Naive thymus-derived CD4-positive, alpha-beta T cell (primary cell): ENCODE measurements at regions of chr2 and their contacts with region 1.

Region 1: GRCh38 chr2:219253753-219254590 is at the start of gene TUBA4A:
- DNase-seq: peak; percentile 84 to 94 (median 91)
- ATAC-seq: peak; percentile 92
- H3K4me3 ChIP-seq: peak within 1 kb of the TSS; percentile 79
- H3K4me3 Mint-ChIP-seq: peak within 1 kb of the TSS; percentile 82 to 100 (median 92)
- H3K27ac ChIP-seq: peak within 1 kb of the TSS; percentile 95
- H3K27ac Mint-ChIP-seq: peak within 1 kb of the TSS; percentile 88 to 99 (median 96)
- H3K4me1 ChIP-seq: peaks cover 31 to 38% of the 10 kb centered on the region in 2 donors
- H3K4me1 Mint-ChIP-seq: peaks cover 28 to 54% (median 47%) of the 10 kb centered on the region in 7 donors
- H3K27me3 ChIP-seq: no peaks in the 10 kb centered on the region
- H3K27me3 Mint-ChIP-seq: peaks cover 0 to 3% (median 0%) of the 10 kb centered on the region in 5 donors
- total RNA-seq, gene TUBA4A: 82.9 to 260 (median 183) TPM

Region 2: GRCh38 chr2:218286570-218287459 is 967.2 kb before region 1 on chr2:
- CTCF ChIA-PET with region 1: no interaction called
- POLR2A ChIA-PET with region 1: interaction called, 3 read pairs
- intact Hi-C with region 1: loop called in 1 of 2 experiments (anchors 10 kb)
- DNase-seq: peak; percentile 53 to 90 (median 78)
- ATAC-seq: peak; percentile 87
- H3K4me3 ChIP-seq: peak overlapping the region; percentile 66
- H3K4me3 Mint-ChIP-seq: peak overlapping the region; percentile 85 to 97 (median 94)
- H3K27ac ChIP-seq: peak overlapping the region; percentile 93
- H3K27ac Mint-ChIP-seq: peak overlapping the region; percentile 95 to 99 (median 99)
- H3K4me1 ChIP-seq: peaks cover 74 to 77% of the 10 kb centered on the region in 2 donors
- H3K4me1 Mint-ChIP-seq: peaks cover 53 to 87% (median 76%) of the 10 kb centered on the region in 7 donors
- H3K27me3 ChIP-seq: no peaks in the 10 kb centered on the region
- H3K27me3 Mint-ChIP-seq: no peaks in the 10 kb centered on the region

Region 3: GRCh38 chr2:218898109-218898878 is 355.7 kb before region 1 on chr2:
- CTCF ChIA-PET with region 1: no interaction called
- POLR2A ChIA-PET with region 1: no interaction called
- intact Hi-C with region 1: loop called in 1 of 2 experiments (anchors 5 kb)
- DNase-seq: peak; percentile 50 to 88 (median 72)
- ATAC-seq: peak; percentile 42
- H3K4me3 ChIP-seq: peak overlapping the region; percentile 65
- H3K4me3 Mint-ChIP-seq: peak overlapping the region; percentile 53 to 87 (median 82)
- H3K27ac ChIP-seq: no peak overlapping the region
- H3K27ac Mint-ChIP-seq: peak overlapping the region in 7 of 9 donors; percentile 33 to 92 (median 71)
- H3K4me1 ChIP-seq: peaks cover 40 to 49% of the 10 kb centered on the region in 2 donors
- H3K4me1 Mint-ChIP-seq: peaks cover 38 to 48% (median 42%) of the 10 kb centered on the region in 7 donors
- H3K27me3 ChIP-seq: peaks cover 0 to 3% of the 10 kb centered on the region in 2 donors
- H3K27me3 Mint-ChIP-seq: peaks cover 20 to 75% (median 40%) of the 10 kb centered on the region in 5 donors

Region 4: GRCh38 chr2:219218732-219219701 is 35.0 kb before region 1 on chr2 and contains the start of gene ABCB6:
- CTCF ChIA-PET with region 1: interaction called, 7 read pairs
- POLR2A ChIA-PET with region 1: interaction called, 49 read pairs
- intact Hi-C with region 1: loop called (anchors 1 kb)
- DNase-seq: peak; percentile 72 to 90 (median 85)
- ATAC-seq: peak; percentile 92
- H3K4me3 ChIP-seq: peak within 1 kb of the TSS; percentile 60
- H3K4me3 Mint-ChIP-seq: peak within 1 kb of the TSS; percentile 78 to 89 (median 82)
- H3K27ac ChIP-seq: peak within 1 kb of the TSS; percentile 65
- H3K27ac Mint-ChIP-seq: peak within 1 kb of the TSS; percentile 61 to 86 (median 79)
- H3K4me1 ChIP-seq: peaks cover 13 to 14% of the 10 kb centered on the region in 2 donors
- H3K4me1 Mint-ChIP-seq: peaks cover 0 to 29% (median 24%) of the 10 kb centered on the region in 7 donors
- H3K27me3 ChIP-seq: no peaks in the 10 kb centered on the region
- H3K27me3 Mint-ChIP-seq: no peaks in the 10 kb centered on the region
- total RNA-seq, gene ABCB6: 4.1 to 30.2 (median 8.3) TPM

Region 5: GRCh38 chr2:219229305-219230058 is 24.5 kb before region 1 on chr2 and contains the starts of genes ANKZF1 and ATG9A:
- CTCF ChIA-PET with region 1: interaction called, 14 read pairs
- POLR2A ChIA-PET with region 1: interaction called, 575 read pairs
- intact Hi-C with region 1: loop called (anchors 1 kb)
- DNase-seq: peak; percentile 92 to 99 (median 99)
- ATAC-seq: peak; percentile 98
- H3K4me3 ChIP-seq: peak within 1 kb of the TSS; percentile 80
- H3K4me3 Mint-ChIP-seq: peak within 1 kb of the TSS; percentile 94 to 100 (median 98)
- H3K27ac ChIP-seq: peak within 1 kb of the TSS; percentile 90
- H3K27ac Mint-ChIP-seq: peak within 1 kb of the TSS; percentile 96 to 100 (median 96)
- H3K4me1 ChIP-seq: peaks cover 17 to 22% of the 10 kb centered on the region in 2 donors
- H3K4me1 Mint-ChIP-seq: peaks cover 33 to 83% (median 69%) of the 10 kb centered on the region in 7 donors
- H3K27me3 ChIP-seq: no peaks in the 10 kb centered on the region
- H3K27me3 Mint-ChIP-seq: no peaks in the 10 kb centered on the region
- total RNA-seq, gene ANKZF1: 117 to 287 (median 169) TPM
- total RNA-seq, gene ATG9A: 52.6 to 66.0 (median 60.9) TPM

Region 6: DNA sequence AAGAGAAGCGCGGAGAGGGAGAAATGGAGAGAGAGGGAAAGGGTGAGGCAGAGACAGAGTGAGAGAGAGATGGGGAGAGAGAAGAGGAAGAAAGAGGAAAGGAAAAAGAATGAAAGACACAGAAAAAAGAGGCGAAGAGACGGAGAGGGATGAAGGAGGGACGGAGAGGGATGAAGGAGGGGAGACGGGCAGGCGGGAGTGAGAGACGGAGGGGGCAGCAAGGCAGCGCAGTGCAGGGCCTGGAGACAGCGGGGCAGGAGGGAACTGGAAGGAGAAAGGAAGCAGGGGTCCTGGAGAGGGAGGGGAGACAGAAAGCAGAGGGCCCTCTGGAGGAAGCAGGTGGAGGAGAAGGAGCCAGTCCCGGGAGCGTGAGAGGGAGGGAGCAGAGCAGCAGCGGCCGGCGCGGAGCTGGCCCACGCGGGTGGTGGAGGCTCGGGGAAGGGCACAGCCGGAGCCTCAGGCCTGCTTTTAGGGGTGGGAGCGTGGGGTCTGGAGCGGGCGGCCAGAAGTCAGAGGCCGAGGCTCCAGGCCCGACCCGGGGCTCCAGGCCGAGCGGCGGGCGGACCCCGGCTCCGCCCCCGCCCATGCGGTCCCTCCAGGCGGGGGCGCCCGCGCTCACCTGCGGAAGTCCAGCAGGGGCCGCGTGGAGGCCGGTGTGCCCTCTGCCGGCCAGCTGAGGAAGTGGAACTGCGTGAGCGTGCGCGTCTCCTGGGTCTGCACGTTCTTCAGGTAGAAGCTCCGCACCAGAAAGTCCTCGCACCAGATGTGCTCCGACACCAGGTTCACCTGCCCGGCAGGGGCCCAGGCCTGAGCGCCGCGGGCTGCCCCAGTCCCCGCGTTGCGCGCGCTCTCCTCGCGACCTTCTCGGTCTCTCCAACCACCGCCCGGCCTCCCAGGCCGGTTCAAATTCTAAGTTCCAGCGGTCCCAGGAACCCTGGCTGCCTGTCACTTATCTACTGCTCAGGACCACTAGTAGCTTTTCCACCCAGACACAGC is 40.7 kb after region 1 on chr2:
- CTCF ChIA-PET with region 1: interaction called, 21 read pairs
- POLR2A ChIA-PET with region 1: interaction called, 31 read pairs
- intact Hi-C with region 1: loop called (anchors 1 kb)
- DNase-seq: peak; percentile 80 to 93 (median 90)
- ATAC-seq: peak; percentile 99
- H3K4me3 ChIP-seq: peak overlapping the region; percentile 47
- H3K4me3 Mint-ChIP-seq: peak overlapping the region; percentile 68 to 89 (median 82)
- H3K27ac ChIP-seq: peak overlapping the region; percentile 79
- H3K27ac Mint-ChIP-seq: peak overlapping the region; percentile 56 to 88 (median 84)
- H3K4me1 ChIP-seq: peaks cover 2 to 20% of the 10 kb centered on the region in 2 donors
- H3K4me1 Mint-ChIP-seq: peaks cover 11 to 34% (median 27%) of the 10 kb centered on the region in 7 donors
- H3K27me3 ChIP-seq: no peaks in the 10 kb centered on the region
- H3K27me3 Mint-ChIP-seq: peaks cover 0 to 9% (median 0%) of the 10 kb centered on the region in 5 donors

Region 7: DNA sequence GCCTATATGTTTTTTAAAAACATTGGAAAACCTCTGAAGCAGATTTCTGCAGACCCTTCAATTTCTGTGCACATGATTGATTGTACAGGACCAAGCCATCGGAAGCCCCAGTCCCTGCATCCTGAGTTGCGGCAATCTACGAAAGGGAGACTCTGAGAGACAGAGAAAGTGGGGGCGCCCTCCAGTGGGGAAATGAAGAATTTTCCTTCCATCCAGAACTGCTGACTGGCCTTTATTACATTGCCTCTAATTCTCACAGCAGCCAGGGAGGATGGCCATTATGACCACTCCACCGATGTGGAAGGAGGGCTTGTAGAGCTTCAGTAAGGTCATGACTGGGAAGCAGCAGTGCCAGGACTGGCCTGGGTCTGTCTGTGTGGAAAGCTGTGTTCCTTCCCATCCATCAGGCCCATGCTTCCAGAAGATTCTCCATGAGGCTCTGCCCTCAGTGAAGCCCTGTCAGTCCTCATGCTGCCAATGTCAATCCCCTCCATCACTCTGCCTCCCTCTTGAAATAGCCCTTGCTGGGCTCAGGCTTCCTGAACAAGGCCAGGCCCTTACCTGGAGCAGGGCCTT is 98.6 kb after region 1 on chr2:
- CTCF ChIA-PET with region 1: no interaction called
- POLR2A ChIA-PET with region 1: no interaction called
- intact Hi-C with region 1: loop called in 1 of 2 experiments (anchors 1 kb)
- DNase-seq: peak; percentile 25 to 66 (median 58)
- ATAC-seq: peak; percentile 87
- H3K4me3 ChIP-seq: no peak overlapping the region
- H3K4me3 Mint-ChIP-seq: no peak overlapping the region
- H3K27ac ChIP-seq: no peak overlapping the region
- H3K27ac Mint-ChIP-seq: no peak overlapping the region
- H3K4me1 ChIP-seq: no peaks in the 10 kb centered on the region
- H3K4me1 Mint-ChIP-seq: no peaks in the 10 kb centered on the region
- H3K27me3 ChIP-seq: no peaks in the 10 kb centered on the region
- H3K27me3 Mint-ChIP-seq: peaks cover 43 to 64% (median 48%) of the 10 kb centered on the region in 5 donors